ENCODE measurements at regions of chr1 and their contacts with region 1.

Region 1: GRCh38 chr1:154884869-154885701 is 15.0 kb upstream of the KCNN3 start:
- DNase-seq: peak in 1 of 4 experiments; percentile 44
- ATAC-seq: no peak
- H3K4me3 ChIP-seq: no peak overlapping the region
- H3K27ac ChIP-seq: no peak overlapping the region
- H3K4me1 ChIP-seq: peaks cover 28 to 52% of the 10 kb centered on the region in 2 experiments
- H3K27me3 ChIP-seq: peaks cover 0 to 10% of the 10 kb centered on the region in 2 experiments; a peak in 1 of 5 replicates
- CTCF ChIP-seq: no peak
- EP300 ChIP-seq: no peak
- POLR2A ChIP-seq: no peak
- RAD21 ChIP-seq: no peak

Region 2: DNA sequence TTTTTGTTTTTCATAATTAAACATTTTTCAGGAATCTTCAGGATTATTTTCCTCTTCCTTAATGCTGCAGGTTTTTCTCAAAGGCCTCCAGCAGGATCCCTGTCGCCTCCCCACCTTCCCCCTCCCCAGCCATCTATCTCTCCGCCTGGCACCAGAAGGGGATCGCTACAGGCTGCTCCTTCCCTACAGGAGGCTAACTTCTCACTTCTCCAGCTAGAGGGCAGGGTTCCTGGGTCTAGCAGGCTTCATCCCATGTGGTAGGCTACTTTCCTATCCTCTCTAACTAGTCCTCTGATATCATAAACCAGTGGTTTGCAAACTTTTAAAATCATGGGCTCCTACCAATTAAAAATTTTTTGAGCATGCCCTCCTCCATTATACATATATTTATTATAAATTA is 119.1 kb before region 1 on chr1:
- CTCF ChIA-PET with region 1: no interaction called
- POLR2A ChIA-PET with region 1: no interaction called
- in situ Hi-C with region 1: loop called (anchors 5 kb)
- intact Hi-C with region 1: no loop called
- DNase-seq: peak in 2 of 4 experiments; percentile 49 to 57
- ATAC-seq: peak; percentile 85
- H3K4me3 ChIP-seq: no peak overlapping the region
- H3K27ac ChIP-seq: no peak overlapping the region
- H3K4me1 ChIP-seq: no peaks in the 10 kb centered on the region
- H3K27me3 ChIP-seq: peaks cover 18 to 43% of the 10 kb centered on the region in 2 experiments; a peak in 4 of 5 replicates
- CTCF ChIP-seq: peak; percentile 45 to 61 (median 61); a peak in 4 of 6 replicates
- EP300 ChIP-seq: no peak
- POLR2A ChIP-seq: no peak
- RAD21 ChIP-seq: peak; percentile 26 to 56; a peak in 3 of 4 replicates

Region 3: GRCh38 chr1:154936555-154937084 is 51.5 kb after region 1 on chr1 and contains the start of gene PMVK:
- CTCF ChIA-PET with region 1: no interaction called
- POLR2A ChIA-PET with region 1: interaction called, 3 read pairs
- in situ Hi-C with region 1: no loop called
- intact Hi-C with region 1: loop called (anchors 2 kb)
- DNase-seq: peak; percentile 97 to 98 (median 97)
- ATAC-seq: peak; percentile 95
- H3K4me3 ChIP-seq: peak within 1 kb of the TSS; percentile 53
- H3K27ac ChIP-seq: peak within 1 kb of the TSS; percentile 100
- H3K4me1 ChIP-seq: peaks cover 18 to 37% of the 10 kb centered on the region in 2 experiments; a peak in 4 of 5 replicates
- H3K27me3 ChIP-seq: no peaks in the 10 kb centered on the region
- CTCF ChIP-seq: peak; percentile 58 to 75 (median 74)
- EP300 ChIP-seq: no peak; the same call in none of the 2 replicates
- POLR2A ChIP-seq: peak; percentile 81
- RAD21 ChIP-seq: peak; percentile 52 to 75
- polyA plus RNA-seq, gene PMVK: 1.1 to 3.8 TPM